Heart left ventricle (tissue), 16 donors: ENCODE measurements at regions of chr12 and their contacts with region 1.

Region 1: GRCh38 chr12:32399337-32400113 is at the start of gene FGD4:
- DNase-seq: peak; percentile 85 to 95 (median 91)
- ATAC-seq: peak; percentile 96 to 98 (median 98)
- H3K4me3 ChIP-seq: peak within 1 kb of the TSS; percentile 44 to 98 (median 89)
- H3K27ac ChIP-seq: peak within 1 kb of the TSS; percentile 62 to 89 (median 80)
- H3K4me1 ChIP-seq: peaks cover 0 to 30% (median 7%) of the 10 kb centered on the region in 12 donors
- H3K27me3 ChIP-seq: peaks cover 0 to 7% (median 0%) of the 10 kb centered on the region in 9 donors
- CTCF ChIP-seq: peak; percentile 26 to 67 (median 48)
- POLR2A ChIP-seq: peak in 1 of 2 donors; percentile 88
- total RNA-seq, gene FGD4: 7.1 to 36.8 (median 28.5) TPM

Region 2: GRCh38 chr12:32444895-32445294 is 45.4 kb after region 1 on chr12:
- intact Hi-C with region 1: loop called in 2 of 10 experiments (anchors 5 kb)
- DNase-seq: no peak
- ATAC-seq: no peak
- H3K4me3 ChIP-seq: no peak overlapping the region
- H3K27ac ChIP-seq: no peak overlapping the region
- H3K4me1 ChIP-seq: peaks cover 0 to 40% (median 14%) of the 10 kb centered on the region in 12 donors
- H3K27me3 ChIP-seq: no peaks in the 10 kb centered on the region
- CTCF ChIP-seq: no peak
- POLR2A ChIP-seq: no peak